Activated CD4-positive, alpha-beta T cell treated with anti-CD3 and anti-CD28 coated beads, Interleukin-2, amount 10 ng/mL, durations not matched to agents 24 days and 14 days (primary cell): ENCODE measurements at regions of chr7 and their contacts with region 1.

Region 1: DNA sequence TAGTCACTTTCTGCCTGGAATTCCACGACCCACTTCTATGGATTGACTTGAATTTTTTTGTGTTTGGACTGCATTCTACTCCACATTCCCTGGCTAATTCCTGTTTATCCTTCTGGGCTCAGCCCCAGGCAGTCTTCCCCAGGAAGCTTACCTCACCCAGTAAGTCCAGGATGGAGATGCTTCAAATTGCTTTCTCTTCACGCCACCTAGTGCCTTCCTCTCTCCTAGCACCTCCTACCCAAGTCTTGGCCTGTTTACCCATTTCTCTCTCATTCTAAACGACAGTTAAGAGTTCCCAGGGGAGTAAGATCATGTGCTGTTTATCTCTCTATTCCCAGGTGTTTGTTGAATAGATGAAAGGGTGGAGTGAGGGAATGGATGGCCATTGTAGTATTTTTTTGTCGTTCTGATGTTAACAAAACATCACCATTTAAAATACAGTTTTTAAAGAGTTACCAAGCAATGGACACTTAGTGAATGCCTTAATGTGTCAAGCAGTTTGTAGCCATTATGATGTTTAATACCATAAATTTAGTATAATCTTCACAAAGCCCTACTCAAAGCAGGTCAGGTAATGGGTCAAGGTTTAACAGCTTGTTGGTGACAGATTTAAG is 45.5 kb upstream of the TARP start:
- DNase-seq: no peak
- H3K4me3 Mint-ChIP-seq: peak overlapping the region; percentile 55
- H3K27ac Mint-ChIP-seq: peak overlapping the region; percentile 1
- H3K4me1 Mint-ChIP-seq: peaks cover 19% of the 10 kb centered on the region
- H3K27me3 Mint-ChIP-seq: peaks cover 1% of the 10 kb centered on the region

Region 2: GRCh38 chr7:38107486-38107893 is 211.4 kb before region 1 on chr7:
- intact Hi-C with region 1: loop called (anchors 5 kb)
- DNase-seq: peak; percentile 90
- H3K4me3 Mint-ChIP-seq: no peak overlapping the region
- H3K27ac Mint-ChIP-seq: no peak overlapping the region
- H3K4me1 Mint-ChIP-seq: no peaks in the 10 kb centered on the region
- H3K27me3 Mint-ChIP-seq: peaks cover 40% of the 10 kb centered on the region

Region 3: GRCh38 chr7:38215735-38216670 is 102.9 kb before region 1 on chr7:
- intact Hi-C with region 1: loop called (anchors 1 kb)
- DNase-seq: peak; percentile 92
- H3K4me3 Mint-ChIP-seq: no peak overlapping the region
- H3K27ac Mint-ChIP-seq: no peak overlapping the region
- H3K4me1 Mint-ChIP-seq: peaks cover 38% of the 10 kb centered on the region
- H3K27me3 Mint-ChIP-seq: no peaks in the 10 kb centered on the region

Region 4: GRCh38 chr7:38257350-38257677 is 61.6 kb before region 1 on chr7:
- intact Hi-C with region 1: loop called (anchors 1 kb)
- DNase-seq: no peak
- H3K4me3 Mint-ChIP-seq: no peak overlapping the region
- H3K27ac Mint-ChIP-seq: no peak overlapping the region
- H3K4me1 Mint-ChIP-seq: no peaks in the 10 kb centered on the region
- H3K27me3 Mint-ChIP-seq: no peaks in the 10 kb centered on the region